ENCODE measurements at regions of chr7 and their contacts with region 1.

Region 1: DNA sequence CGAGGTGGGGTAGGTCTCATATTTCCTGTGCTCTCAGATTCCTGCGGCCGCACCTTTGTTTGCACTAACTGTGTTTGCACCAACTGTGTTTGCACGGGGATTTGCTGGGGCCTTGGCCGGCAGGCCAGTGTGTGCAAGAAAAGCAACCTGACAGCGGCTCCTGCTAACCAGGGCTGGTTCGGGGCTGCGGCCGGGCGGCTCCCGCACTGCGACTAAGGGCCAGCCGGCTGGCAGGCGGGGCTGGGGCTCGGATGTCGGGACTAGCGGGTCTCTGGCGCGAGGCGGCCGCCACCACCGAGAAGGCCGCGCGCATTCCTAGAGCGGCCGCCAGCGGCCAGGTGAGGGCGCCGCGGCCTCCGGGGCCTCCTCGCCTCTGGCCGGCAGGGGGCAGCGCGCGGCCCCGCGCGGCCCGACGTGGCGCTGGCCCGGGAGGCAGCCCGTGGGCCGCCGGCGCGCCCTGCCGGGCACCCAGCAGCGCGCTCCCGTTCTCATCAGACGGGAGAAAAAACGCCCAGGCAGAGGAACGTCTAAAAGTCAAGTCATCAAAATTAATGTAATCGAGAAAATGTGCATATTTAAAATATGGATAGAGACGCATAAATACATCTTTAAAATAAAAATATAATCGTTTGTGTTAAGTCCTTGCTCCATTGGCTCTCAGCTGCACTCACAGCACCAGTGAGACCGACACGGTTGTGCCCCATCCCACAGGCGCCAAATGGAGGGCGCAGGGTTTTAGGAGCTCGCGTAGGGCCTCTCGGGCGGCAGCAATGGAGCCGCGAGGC is 38.5 kb downstream of the ZNF777 start:
- DNase-seq: peak; percentile 68
- H3K4me3 Mint-ChIP-seq: peak overlapping the region; percentile 71
- H3K27ac Mint-ChIP-seq: peak overlapping the region; percentile 55
- H3K4me1 Mint-ChIP-seq: peaks cover 3% of the 10 kb centered on the region
- H3K27me3 Mint-ChIP-seq: peaks cover 5% of the 10 kb centered on the region

Region 2: GRCh38 chr7:149278396-149279045 is 143.8 kb before region 1 on chr7:
- intact Hi-C with region 1: no loop called
- DNase-seq: no peak
- H3K4me3 Mint-ChIP-seq: no peak overlapping the region
- H3K27ac Mint-ChIP-seq: no peak overlapping the region
- H3K4me1 Mint-ChIP-seq: no peaks in the 10 kb centered on the region
- H3K27me3 Mint-ChIP-seq: no peaks in the 10 kb centered on the region

Region 3: GRCh38 chr7:149460493-149461277 is 38.4 kb after region 1 on chr7 and contains the start of gene ZNF777:
- intact Hi-C with region 1: loop called (anchors 2 kb)
- DNase-seq: peak; percentile 80
- H3K4me3 Mint-ChIP-seq: peak within 1 kb of the TSS; percentile 84
- H3K27ac Mint-ChIP-seq: peak within 1 kb of the TSS; percentile 79
- H3K4me1 Mint-ChIP-seq: peaks cover 19% of the 10 kb centered on the region
- H3K27me3 Mint-ChIP-seq: peaks cover 10% of the 10 kb centered on the region
- total RNA-seq, gene ZNF777: 16.6 TPM in 2 replicates